ENCODE measurements at regions of chr19 and their contacts with region 1.

Region 1: GRCh38 chr19:13262450-13262849 is 112.2 kb downstream of the IER2 start:
- DNase-seq: no peak
- ATAC-seq: peak; percentile 36
- H3K4me3 Mint-ChIP-seq: no peak overlapping the region
- H3K27ac Mint-ChIP-seq: peak overlapping the region; percentile 35
- H3K4me1 Mint-ChIP-seq: peaks cover 28% of the 10 kb centered on the region
- H3K27me3 Mint-ChIP-seq: peaks cover under 1% of the 10 kb centered on the region
- CTCF ChIP-seq: no peak

Region 2: DNA sequence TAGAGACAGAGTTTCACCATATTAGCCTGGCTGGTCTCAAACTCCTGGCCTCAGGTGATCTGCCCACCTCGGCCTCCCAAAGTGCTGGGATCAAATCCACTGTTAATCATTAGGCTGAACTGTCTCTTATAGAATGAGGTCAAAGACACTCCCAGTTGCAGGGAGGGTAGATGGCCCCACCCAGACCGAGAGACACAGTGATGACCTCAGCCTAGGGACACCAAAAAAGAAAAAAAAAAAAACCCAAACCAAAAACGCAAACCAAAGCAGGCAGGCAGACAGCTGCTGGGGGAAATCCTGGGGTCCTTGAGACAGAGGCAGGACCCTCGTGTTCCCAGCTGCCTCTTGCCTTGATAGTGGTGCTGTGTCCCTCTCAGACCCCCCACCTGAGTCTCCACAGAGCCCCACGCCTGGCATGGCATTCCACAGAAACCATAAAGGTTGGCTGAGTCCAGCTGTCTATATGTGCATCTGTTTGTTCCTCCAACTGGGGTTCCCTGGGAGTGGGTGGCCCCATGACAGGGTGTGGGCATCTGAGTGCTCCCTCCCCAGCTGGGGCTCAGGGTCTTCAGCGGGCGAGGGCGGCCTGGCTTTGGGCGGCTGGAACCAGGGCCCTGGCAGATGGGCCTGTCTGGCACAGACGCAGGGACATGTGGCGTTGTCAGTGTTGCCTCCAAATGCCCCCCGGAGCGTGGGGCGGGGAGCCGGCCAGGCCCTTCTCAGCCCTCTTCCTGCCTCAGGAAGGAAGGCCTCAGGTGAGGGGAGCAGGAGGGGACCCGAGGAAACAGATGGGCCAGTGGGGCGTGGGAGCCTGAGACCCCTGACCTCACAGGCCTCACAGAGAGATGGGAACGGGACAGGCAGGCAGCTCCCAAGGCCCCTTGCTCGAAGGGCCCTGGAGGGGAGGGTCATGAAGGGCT is 287.9 kb before region 1 on chr19:
- CTCF ChIA-PET with region 1: interaction called, 11 read pairs
- POLR2A ChIA-PET with region 1: interaction called, 3 read pairs
- intact Hi-C with region 1: loop called (anchors 1 kb)
- DNase-seq: no peak
- ATAC-seq: no peak
- H3K4me3 Mint-ChIP-seq: no peak overlapping the region
- H3K27ac Mint-ChIP-seq: no peak overlapping the region
- H3K4me1 Mint-ChIP-seq: peaks cover 6% of the 10 kb centered on the region
- H3K27me3 Mint-ChIP-seq: peaks cover 7% of the 10 kb centered on the region
- CTCF ChIP-seq: no peak

Region 3: DNA sequence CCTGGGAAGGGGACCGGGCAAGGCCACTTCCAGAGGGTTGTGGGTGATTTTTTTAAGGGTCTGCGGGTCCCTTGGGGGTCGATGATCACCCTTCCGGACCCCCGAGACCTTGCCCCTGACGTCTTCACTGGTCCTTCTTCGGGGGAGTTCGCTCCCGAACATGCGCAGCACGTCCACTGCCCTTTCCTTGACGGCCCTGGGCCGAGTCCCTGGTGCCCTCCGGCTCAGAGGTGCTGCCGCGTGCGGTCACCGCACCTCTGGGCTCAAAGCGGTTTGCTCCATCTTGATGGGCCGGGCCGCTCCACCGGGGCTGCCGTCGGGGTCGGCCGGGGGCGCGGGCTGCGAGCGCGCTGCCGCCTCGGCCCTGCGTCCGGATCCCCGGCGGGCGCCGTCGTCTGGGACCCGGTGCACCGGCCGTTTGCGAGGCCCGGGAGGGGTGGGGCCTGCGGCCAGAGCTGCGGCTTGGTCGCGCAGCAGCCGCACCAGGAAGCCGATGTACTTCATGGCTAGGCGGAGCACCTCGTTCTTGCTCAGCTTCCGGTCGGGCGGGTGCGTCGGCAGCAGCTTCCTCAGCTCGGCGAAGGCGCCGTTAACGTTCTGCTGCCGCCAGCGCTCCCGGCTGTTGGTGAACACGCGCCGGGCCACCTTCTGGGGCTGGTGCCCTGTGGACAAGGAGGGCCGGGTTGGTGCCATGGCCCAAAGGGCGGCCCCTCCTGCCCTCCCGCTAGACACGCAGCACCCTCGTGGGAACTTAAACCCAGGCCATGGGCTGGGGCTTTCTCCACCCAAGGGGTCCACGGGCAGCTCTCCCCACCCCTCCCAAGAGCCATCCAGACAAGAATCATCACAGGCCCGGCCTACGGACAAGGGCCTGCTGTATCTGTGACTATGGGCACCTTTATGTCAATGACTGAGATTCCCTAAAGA is 163.1 kb before region 1 on chr19:
- CTCF ChIA-PET with region 1: interaction called, 9 read pairs
- POLR2A ChIA-PET with region 1: interaction called, 17 read pairs
- intact Hi-C with region 1: loop called (anchors 1 kb)
- DNase-seq: peak; percentile 70
- ATAC-seq: peak; percentile 2
- H3K4me3 Mint-ChIP-seq: peak overlapping the region; percentile 88
- H3K27ac Mint-ChIP-seq: peak overlapping the region; percentile 93
- H3K4me1 Mint-ChIP-seq: peaks cover 76% of the 10 kb centered on the region
- H3K27me3 Mint-ChIP-seq: no peaks in the 10 kb centered on the region
- CTCF ChIP-seq: no peak

Region 4: GRCh38 chr19:13212759-13213330 is 49.6 kb before region 1 on chr19:
- CTCF ChIA-PET with region 1: interaction called, 8 read pairs
- POLR2A ChIA-PET with region 1: interaction called, 13 read pairs
- intact Hi-C with region 1: loop called (anchors 1 kb)
- DNase-seq: peak; percentile 60
- ATAC-seq: no peak
- H3K4me3 Mint-ChIP-seq: no peak overlapping the region
- H3K27ac Mint-ChIP-seq: no peak overlapping the region
- H3K4me1 Mint-ChIP-seq: peaks cover 66% of the 10 kb centered on the region
- H3K27me3 Mint-ChIP-seq: no peaks in the 10 kb centered on the region
- CTCF ChIP-seq: no peak

Region 5: GRCh38 chr19:13241231-13242104 is 21.0 kb before region 1 on chr19:
- CTCF ChIA-PET with region 1: interaction called, 7 read pairs
- POLR2A ChIA-PET with region 1: no interaction called
- intact Hi-C with region 1: loop called (anchors 1 kb)
- DNase-seq: peak; percentile 17
- ATAC-seq: peak; percentile 79
- H3K4me3 Mint-ChIP-seq: no peak overlapping the region
- H3K27ac Mint-ChIP-seq: no peak overlapping the region
- H3K4me1 Mint-ChIP-seq: peaks cover 20% of the 10 kb centered on the region
- H3K27me3 Mint-ChIP-seq: no peaks in the 10 kb centered on the region
- CTCF ChIP-seq: no peak

Measured in activated B cell treated with CpG ODN at 0.5 μM for 24 hours (primary cell).